Ascending aorta (tissue), 2 donors: ENCODE measurements at regions of chr6 and their contacts with region 1.

Region 1: GRCh38 chr6:112180095-112180820 is 74.1 kb downstream of the LAMA4 start:
- DNase-seq: no peak
- H3K4me3 ChIP-seq: no peak overlapping the region
- H3K27ac ChIP-seq: no peak overlapping the region
- H3K4me1 ChIP-seq: no peaks in the 10 kb centered on the region
- H3K27me3 ChIP-seq: no peaks in the 10 kb centered on the region
- CTCF ChIP-seq: peak; percentile 37 to 78 (median 66)

Region 2: GRCh38 chr6:112216699-112217551 is 36.7 kb after region 1 on chr6:
- intact Hi-C with region 1: loop called (anchors 5 kb)
- DNase-seq: no peak
- H3K4me3 ChIP-seq: no peak overlapping the region
- H3K27ac ChIP-seq: no peak overlapping the region
- H3K4me1 ChIP-seq: peaks cover 0 to 4% of the 10 kb centered on the region in 2 donors
- H3K27me3 ChIP-seq: no peaks in the 10 kb centered on the region
- CTCF ChIP-seq: no peak

Region 3: DNA sequence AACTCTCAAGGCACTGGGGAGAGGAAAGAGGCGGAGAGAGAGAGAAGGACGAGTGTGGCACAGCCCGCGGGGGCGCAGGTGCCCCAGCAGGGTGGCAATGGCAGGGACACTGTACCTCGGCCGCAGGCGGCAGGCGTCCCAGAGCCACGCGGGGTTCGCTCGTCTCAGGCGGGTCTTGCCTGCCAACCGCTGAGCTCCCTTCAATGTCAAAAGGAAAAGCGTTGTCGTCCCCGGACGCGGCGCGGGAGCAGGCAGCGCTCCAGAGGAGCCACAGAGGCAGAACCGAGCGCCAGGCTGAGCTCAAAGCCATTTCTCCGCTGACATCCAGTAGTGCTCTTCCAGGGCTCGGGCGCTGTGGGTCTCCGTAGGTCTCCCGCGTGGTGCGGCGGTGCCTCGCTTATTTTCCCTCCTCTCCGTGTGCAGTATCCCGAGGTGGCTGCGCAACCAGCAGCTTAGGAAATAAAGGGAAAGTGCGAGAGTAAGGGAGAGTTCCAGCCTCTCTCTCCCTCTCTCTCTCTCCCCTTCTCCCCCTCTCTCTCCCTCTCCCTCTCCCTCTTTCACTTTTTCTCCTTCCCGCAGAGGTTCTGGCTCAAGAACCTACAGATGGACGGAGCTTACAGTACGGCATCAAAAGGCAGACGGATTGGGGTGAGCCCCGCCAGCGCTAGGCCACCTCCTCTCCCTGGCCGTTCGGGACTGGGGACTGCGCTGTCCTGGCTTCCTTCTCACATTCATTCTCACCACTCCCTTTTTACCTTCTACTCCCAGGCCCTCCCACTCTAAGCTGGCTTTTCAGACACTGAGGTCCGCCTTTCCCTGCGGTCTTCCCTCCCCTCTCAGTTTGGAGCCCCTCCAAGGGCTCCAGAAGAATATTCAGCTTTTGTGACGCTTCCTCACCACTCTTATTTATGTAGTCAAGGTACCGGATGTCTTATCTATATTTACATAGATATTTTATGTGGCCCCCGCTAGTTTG is 73.9 kb after region 1 on chr6 and contains the start of gene LAMA4:
- intact Hi-C with region 1: loop called (anchors 5 kb)
- DNase-seq: peak in 1 of 2 donors; percentile 66
- H3K4me3 ChIP-seq: peak within 1 kb of the TSS; percentile 71 to 80
- H3K27ac ChIP-seq: peak within 1 kb of the TSS; percentile 63 to 75
- H3K4me1 ChIP-seq: peaks cover 0 to 4% of the 10 kb centered on the region in 2 donors
- H3K27me3 ChIP-seq: no peaks in the 10 kb centered on the region
- CTCF ChIP-seq: no peak
- total RNA-seq, gene LAMA4: 49.0 TPM

Region 4: DNA sequence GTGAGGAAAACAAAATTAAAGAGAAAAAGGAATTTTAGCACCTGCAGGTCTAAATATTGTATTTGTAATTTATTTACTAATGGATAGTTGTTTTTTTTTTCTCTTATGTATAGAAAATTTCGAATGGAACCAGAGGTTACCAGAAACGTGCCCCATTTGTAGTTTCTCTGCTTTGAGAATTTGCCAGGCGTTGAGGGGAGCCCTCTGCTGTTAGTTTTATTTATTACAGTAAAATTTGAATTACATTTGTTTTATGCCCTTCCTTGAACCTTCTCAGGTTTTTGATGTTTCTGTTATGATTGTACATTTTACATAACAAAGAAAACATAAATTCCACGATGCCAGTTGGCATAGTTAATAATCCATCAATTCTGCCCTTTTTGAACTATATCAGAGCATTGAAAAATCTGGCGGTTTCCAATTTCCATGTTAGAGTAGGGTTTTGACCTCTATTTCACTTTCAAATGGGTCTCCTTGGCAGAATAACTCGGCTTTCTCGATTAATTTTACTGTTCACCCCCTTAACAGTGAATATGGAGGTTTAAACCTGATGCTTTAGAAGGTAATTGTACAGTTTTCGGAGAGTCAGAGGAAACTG is 131.8 kb after region 1 on chr6:
- intact Hi-C with region 1: loop called (anchors 1 kb)
- DNase-seq: no peak
- H3K4me3 ChIP-seq: no peak overlapping the region
- H3K27ac ChIP-seq: no peak overlapping the region
- H3K4me1 ChIP-seq: no peaks in the 10 kb centered on the region
- H3K27me3 ChIP-seq: no peaks in the 10 kb centered on the region
- CTCF ChIP-seq: peak; percentile 45 to 78 (median 54)

Region 5: GRCh38 chr6:113340371-113340770 is 1160.1 kb after region 1 on chr6:
- intact Hi-C with region 1: no loop called
- DNase-seq: no peak
- H3K4me3 ChIP-seq: no peak overlapping the region
- H3K27ac ChIP-seq: no peak overlapping the region
- H3K4me1 ChIP-seq: no peaks in the 10 kb centered on the region
- H3K27me3 ChIP-seq: no peaks in the 10 kb centered on the region
- CTCF ChIP-seq: no peak